Posterior cingulate gyrus (tissue), 11 donors: ENCODE measurements at regions of chr6 and their contacts with region 1.

Region 1: GRCh38 chr6:83067448-83068413 is at the start of gene DOP1A:
- DNase-seq: peak; percentile 92 to 99 (median 96)

Region 2: GRCh38 chr6:83192871-83193746 is 125.4 kb after region 1 on chr6 and contains the starts of genes PGM3 and RWDD2A:
- intact Hi-C with region 1: loop called (anchors 5 kb)
- DNase-seq: peak; percentile 87 to 99 (median 92)

Region 3: GRCh38 chr6:83215131-83216047 is 147.7 kb after region 1 on chr6:
- intact Hi-C with region 1: loop called (anchors 1 kb)
- DNase-seq: peak in 8 of 10 donors; percentile 31 to 90 (median 66)

Region 4: GRCh38 chr6:83514866-83515466 is 447.2 kb after region 1 on chr6:
- intact Hi-C with region 1: loop called (anchors 5 kb)
- DNase-seq: peak in 2 of 10 donors; percentile 15 to 31